H1 (cell line): ENCODE measurements at regions of chr17 and their contacts with region 1.

Region 1: DNA sequence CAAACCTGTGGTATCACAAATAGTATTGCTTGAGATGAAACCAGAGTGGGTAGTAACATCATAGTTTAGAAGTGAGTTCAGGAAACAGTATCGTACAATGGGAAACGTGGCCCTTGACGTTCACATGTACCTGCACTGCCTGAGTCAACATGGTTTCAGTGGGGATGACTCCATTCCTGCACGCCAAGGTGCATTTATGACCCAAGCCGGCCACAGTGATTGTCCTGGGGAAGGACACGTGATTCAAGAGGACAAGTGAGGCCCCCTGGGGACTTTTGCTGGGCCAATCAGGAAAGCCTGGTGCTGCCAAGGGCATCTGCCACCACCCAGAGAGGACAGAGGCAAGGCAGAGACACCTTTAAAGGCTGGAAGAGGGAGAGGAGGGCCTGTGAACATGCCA is 119.2 kb downstream of the AXIN2 start:
- DNase-seq: no peak
- H3K4me3 ChIP-seq: no peak overlapping the region
- H3K27ac ChIP-seq: no peak overlapping the region
- H3K4me1 ChIP-seq: no peaks in the 10 kb centered on the region; a peak in 1 of 7 replicates
- H3K27me3 ChIP-seq: no peaks in the 10 kb centered on the region
- CTCF ChIP-seq: no peak
- EP300 ChIP-seq: no peak
- POLR2A ChIP-seq: no peak
- RAD21 ChIP-seq: no peak

Region 2: GRCh38 chr17:65332375-65332774 is 109.9 kb before region 1 on chr17:
- CTCF ChIA-PET with region 1: no interaction called
- POLR2A ChIA-PET with region 1: no interaction called
- DNase-seq: no peak
- H3K4me3 ChIP-seq: no peak overlapping the region
- H3K27ac ChIP-seq: no peak overlapping the region
- H3K4me1 ChIP-seq: peaks cover 0 to 4% (median 0%) of the 10 kb centered on the region in 4 experiments; a peak in 3 of 7 replicates
- H3K27me3 ChIP-seq: no peaks in the 10 kb centered on the region
- CTCF ChIP-seq: no peak
- EP300 ChIP-seq: no peak
- POLR2A ChIP-seq: no peak
- RAD21 ChIP-seq: no peak

Region 3: DNA sequence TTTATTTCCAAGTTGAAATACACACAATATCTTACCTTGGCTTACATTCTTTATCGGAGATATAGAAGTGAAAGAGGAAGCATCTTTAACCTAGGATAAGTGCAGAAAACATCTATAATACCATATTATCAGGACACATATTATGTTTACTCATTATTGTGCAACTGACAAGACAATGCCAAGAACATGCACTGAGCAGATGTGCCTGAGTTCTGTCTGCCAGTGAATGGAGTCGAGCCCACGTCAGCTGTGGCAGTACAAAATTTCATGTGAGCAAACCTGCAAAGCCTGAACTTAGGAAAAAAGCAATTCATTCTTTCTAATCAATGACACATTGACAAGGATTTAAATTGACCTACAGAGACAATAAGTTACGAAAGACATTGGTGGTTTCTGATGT is 35.2 kb before region 1 on chr17:
- CTCF ChIA-PET with region 1: no interaction called
- POLR2A ChIA-PET with region 1: no interaction called
- DNase-seq: no peak
- H3K4me3 ChIP-seq: no peak overlapping the region
- H3K27ac ChIP-seq: no peak overlapping the region
- H3K4me1 ChIP-seq: peaks cover 0 to 4% (median 1%) of the 10 kb centered on the region in 4 experiments; a peak in 2 of 7 replicates
- H3K27me3 ChIP-seq: no peaks in the 10 kb centered on the region
- CTCF ChIP-seq: no peak
- EP300 ChIP-seq: no peak
- POLR2A ChIP-seq: no peak
- RAD21 ChIP-seq: no peak

Region 4: DNA sequence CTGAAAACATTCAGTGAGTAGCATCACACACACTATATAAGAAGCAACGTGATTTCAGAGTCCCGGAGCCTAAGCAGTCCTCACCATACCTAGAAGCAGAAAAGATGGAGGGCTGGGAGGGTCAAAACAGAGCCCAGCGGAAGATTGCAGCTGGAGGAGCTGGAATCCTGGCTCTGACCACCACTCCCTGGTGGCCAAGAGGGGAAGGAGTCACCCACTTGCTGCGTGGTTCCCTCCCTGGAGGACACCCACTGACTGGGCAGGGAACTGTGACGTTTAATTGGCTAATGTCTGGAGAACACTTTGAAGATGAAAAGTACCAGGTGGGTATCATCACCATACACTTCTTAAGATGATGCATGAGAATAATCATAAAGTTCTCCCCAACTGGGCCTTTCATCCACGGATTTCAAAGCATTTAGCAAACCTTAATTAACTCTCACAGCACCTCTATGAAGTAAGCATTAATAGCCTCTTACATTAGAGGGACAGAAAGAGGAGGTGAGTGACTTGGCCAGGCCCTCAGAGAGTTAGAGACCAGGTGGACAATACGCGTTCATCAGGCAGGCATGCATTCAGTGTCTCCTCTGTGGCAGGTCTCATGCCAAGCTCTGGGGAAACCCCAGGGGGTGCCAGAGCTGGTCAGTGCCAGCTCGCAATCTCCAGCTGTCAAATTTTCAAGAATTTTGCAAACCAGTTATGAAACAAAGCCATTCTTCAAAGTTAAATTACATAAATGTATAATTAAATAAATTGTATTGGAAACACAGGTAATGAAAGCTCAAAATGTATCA is 18.7 kb before region 1 on chr17:
- CTCF ChIA-PET with region 1: no interaction called
- POLR2A ChIA-PET with region 1: no interaction called
- DNase-seq: no peak
- H3K4me3 ChIP-seq: no peak overlapping the region
- H3K27ac ChIP-seq: no peak overlapping the region
- H3K4me1 ChIP-seq: no peaks in the 10 kb centered on the region
- H3K27me3 ChIP-seq: no peaks in the 10 kb centered on the region
- CTCF ChIP-seq: peak; percentile 18 to 30 (median 21); a peak in 3 of 4 replicates
- EP300 ChIP-seq: no peak
- POLR2A ChIP-seq: no peak
- RAD21 ChIP-seq: peak; percentile 19 to 35; a peak in 2 of 4 replicates

Region 5: DNA sequence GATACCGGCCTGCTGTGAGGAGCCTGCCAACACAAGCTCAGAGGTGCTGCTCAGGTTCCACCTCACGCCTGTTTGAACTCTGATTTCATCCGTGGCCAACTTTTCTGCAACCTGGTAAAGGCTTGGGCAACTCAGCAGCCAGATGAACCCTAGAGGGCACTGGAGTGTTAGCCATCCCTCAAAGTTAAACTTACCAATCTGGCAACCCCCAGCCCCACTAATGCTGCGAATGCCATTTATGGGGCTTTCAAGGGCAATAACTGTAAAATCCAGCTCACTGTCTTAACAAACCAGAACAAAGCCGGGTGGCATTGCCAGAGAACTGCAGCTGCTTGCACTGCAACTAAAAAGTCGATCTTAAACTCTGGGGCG is 13.7 kb after region 1 on chr17:
- CTCF ChIA-PET with region 1: interaction called, 4 read pairs
- POLR2A ChIA-PET with region 1: interaction called, 19 read pairs
- DNase-seq: peak; percentile 47 to 48
- H3K4me3 ChIP-seq: no peak overlapping the region
- H3K27ac ChIP-seq: no peak overlapping the region
- H3K4me1 ChIP-seq: peaks cover 8 to 21% (median 11%) of the 10 kb centered on the region in 4 experiments
- H3K27me3 ChIP-seq: no peaks in the 10 kb centered on the region; a peak in 2 of 7 replicates
- CTCF ChIP-seq: peak; percentile 56 to 74 (median 72)
- EP300 ChIP-seq: no peak
- POLR2A ChIP-seq: no peak
- RAD21 ChIP-seq: peak; percentile 87 to 94

Region 6: GRCh38 chr17:65470783-65471182 is 28.5 kb after region 1 on chr17:
- CTCF ChIA-PET with region 1: no interaction called
- POLR2A ChIA-PET with region 1: no interaction called
- DNase-seq: no peak
- H3K4me3 ChIP-seq: no peak overlapping the region
- H3K27ac ChIP-seq: no peak overlapping the region
- H3K4me1 ChIP-seq: no peaks in the 10 kb centered on the region
- H3K27me3 ChIP-seq: no peaks in the 10 kb centered on the region
- CTCF ChIP-seq: no peak
- EP300 ChIP-seq: no peak
- POLR2A ChIP-seq: no peak
- RAD21 ChIP-seq: no peak